K562 (cell line): ENCODE measurements at regions of chr6 and their contacts with region 1.

Region 1: GRCh38 chr6:26031595-26032339 is 55.5 kb upstream of the HFE start:
- DNase-seq: peak; percentile 82 to 99 (median 94)
- ATAC-seq: peak; percentile 67
- H3K4me3 ChIP-seq: peak overlapping the region; percentile 61
- H3K27ac ChIP-seq: peak overlapping the region; percentile 99
- H3K4me1 ChIP-seq: peaks cover 16 to 42% of the 10 kb centered on the region in 2 experiments
- H3K27me3 ChIP-seq: no peaks in the 10 kb centered on the region
- CTCF ChIP-seq: peak; percentile 28 to 60 (median 40)
- EP300 ChIP-seq: peak; percentile 77
- POLR2A ChIP-seq: peak; percentile 100
- RAD21 ChIP-seq: peak; percentile 4 to 31; a peak in 1 of 4 replicates

Region 2: GRCh38 chr6:25962149-25963127 is 69.3 kb before region 1 on chr6 and contains the start of gene TRIM38:
- CTCF ChIA-PET with region 1: no interaction called
- POLR2A ChIA-PET with region 1: interaction called, 16 read pairs
- in situ Hi-C with region 1: no loop called
- intact Hi-C with region 1: no loop called
- DNase-seq: peak; percentile 68 to 88 (median 77)
- ATAC-seq: peak; percentile 90
- H3K4me3 ChIP-seq: peak within 1 kb of the TSS; percentile 51
- H3K27ac ChIP-seq: peak within 1 kb of the TSS; percentile 86
- H3K4me1 ChIP-seq: peaks cover 6 to 19% of the 10 kb centered on the region in 2 experiments; a peak in 3 of 5 replicates
- H3K27me3 ChIP-seq: no peaks in the 10 kb centered on the region
- CTCF ChIP-seq: no peak
- EP300 ChIP-seq: no peak; the same call in 1 of the 2 replicates
- POLR2A ChIP-seq: peak; percentile 91
- RAD21 ChIP-seq: 0 out of 4 replicates have a peak, but pooled peaks of 1 of the 2 experiments have one; percentile 12
- polyA plus RNA-seq, gene TRIM38: 1.7 to 2.3 TPM

Region 3: GRCh38 chr6:26054857-26055669 is 23.3 kb after region 1 on chr6:
- CTCF ChIA-PET with region 1: interaction called, 4 read pairs
- POLR2A ChIA-PET with region 1: interaction called, 597 read pairs
- in situ Hi-C with region 1: no loop called
- intact Hi-C with region 1: loop called (anchors 1 kb)
- DNase-seq: peak; percentile 81 to 95 (median 88)
- ATAC-seq: peak; percentile 68
- H3K4me3 ChIP-seq: peak overlapping the region; percentile 60
- H3K27ac ChIP-seq: peak overlapping the region; percentile 94
- H3K4me1 ChIP-seq: peaks cover 7 to 29% of the 10 kb centered on the region in 2 experiments
- H3K27me3 ChIP-seq: no peaks in the 10 kb centered on the region
- CTCF ChIP-seq: peak; percentile 24 to 42 (median 29); a peak in 3 of 6 replicates
- EP300 ChIP-seq: peak; percentile 34
- POLR2A ChIP-seq: peak; percentile 95
- RAD21 ChIP-seq: peak in 1 of 2 experiments; percentile 59; a peak in 2 of 4 replicates

Region 4: DNA sequence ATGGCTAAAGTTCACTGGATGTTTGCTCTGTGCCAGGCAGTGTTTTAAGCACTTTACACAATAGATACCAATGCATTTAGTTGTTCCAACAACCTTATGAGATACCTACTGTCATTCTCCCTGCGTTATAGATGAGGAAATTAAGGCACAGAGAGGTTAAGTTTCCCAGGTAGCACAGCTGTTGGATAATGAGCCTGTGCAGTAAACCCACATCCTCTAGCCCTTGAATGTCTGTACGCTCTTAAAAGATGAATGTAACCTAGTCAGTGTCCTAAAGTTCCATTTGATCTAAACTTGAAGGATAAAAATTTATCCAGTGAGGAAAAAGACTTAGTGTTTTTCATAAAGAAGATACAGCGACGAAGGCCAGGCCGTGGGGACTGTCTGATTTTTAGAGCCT is 83.5 kb after region 1 on chr6:
- CTCF ChIA-PET with region 1: no interaction called
- POLR2A ChIA-PET with region 1: interaction called, 14 read pairs
- in situ Hi-C with region 1: no loop called
- intact Hi-C with region 1: no loop called
- DNase-seq: no peak
- ATAC-seq: no peak
- H3K4me3 ChIP-seq: no peak overlapping the region
- H3K27ac ChIP-seq: no peak overlapping the region
- H3K4me1 ChIP-seq: peaks cover 0 to 8% of the 10 kb centered on the region in 2 experiments; a peak in 2 of 5 replicates
- H3K27me3 ChIP-seq: no peaks in the 10 kb centered on the region
- CTCF ChIP-seq: no peak
- EP300 ChIP-seq: no peak
- POLR2A ChIP-seq: 0 out of 2 replicates have a peak, but pooled peaks have one; percentile 19
- RAD21 ChIP-seq: no peak

Region 5: DNA sequence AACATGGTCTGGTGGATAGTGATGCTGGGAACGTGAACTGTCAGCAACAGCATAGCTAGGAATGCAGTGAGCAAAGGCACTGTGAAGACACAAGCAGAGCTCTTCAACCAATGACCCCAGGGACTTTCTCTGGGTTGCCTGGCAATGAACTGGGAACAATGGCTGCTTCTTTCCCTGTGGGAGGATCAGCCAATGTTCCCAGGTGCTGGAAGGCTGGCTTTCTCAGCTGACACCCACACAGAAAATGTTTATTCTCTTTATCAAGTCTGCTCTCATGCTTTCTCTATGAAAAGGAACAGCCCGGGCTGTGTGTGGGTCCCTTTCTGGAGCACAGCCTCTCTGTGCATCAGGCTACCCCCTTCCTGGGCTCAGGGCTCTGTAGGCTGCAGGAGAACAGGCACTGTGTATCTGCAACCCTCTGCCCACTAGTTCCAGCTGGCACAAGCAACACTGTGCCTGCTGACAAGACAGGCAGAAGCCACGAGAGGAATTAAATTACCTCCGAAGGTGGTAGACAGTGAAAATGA is 109.7 kb after region 1 on chr6:
- CTCF ChIA-PET with region 1: no interaction called
- POLR2A ChIA-PET with region 1: no interaction called
- in situ Hi-C with region 1: no loop called
- intact Hi-C with region 1: no loop called
- DNase-seq: no peak
- ATAC-seq: peak; percentile 57
- H3K4me3 ChIP-seq: no peak overlapping the region
- H3K27ac ChIP-seq: no peak overlapping the region; the same call in 2 of the 3 replicates
- H3K4me1 ChIP-seq: no peaks in the 10 kb centered on the region
- H3K27me3 ChIP-seq: no peaks in the 10 kb centered on the region
- CTCF ChIP-seq: no peak
- EP300 ChIP-seq: no peak
- POLR2A ChIP-seq: no peak
- RAD21 ChIP-seq: no peak

Region 6: DNA sequence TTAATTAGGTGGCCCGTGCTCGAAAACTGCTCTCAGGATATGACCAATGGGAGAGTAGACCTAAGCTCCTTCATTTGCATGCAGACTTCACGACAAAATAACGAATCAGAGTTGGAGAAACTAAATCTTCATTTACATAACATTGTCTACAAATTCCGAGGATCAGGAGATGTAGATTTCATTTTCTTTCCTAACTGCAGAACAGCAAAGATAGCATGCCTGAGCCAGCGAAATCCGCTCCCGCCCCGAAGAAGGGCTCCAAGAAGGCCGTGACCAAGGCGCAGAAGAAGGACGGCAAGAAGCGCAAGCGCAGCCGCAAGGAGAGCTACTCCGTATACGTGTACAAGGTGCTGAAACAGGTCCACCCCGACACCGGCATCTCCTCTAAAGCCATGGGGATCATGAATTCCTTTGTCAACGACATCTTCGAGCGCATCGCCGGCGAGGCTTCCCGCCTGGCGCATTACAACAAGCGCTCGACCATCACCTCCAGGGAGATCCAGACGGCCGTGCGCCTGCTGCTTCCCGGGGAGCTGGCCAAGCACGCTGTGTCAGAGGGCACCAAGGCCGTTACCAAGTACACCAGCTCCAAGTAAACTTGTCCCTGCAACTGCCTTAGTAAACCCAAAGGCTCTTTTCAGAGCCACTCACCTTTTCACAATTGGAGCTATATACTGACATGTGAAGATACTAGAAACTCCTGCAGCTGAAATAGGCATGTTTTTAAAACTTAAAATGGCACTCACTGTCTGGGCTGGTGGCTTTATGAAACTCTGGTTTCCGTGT is 152.0 kb after region 1 on chr6:
- CTCF ChIA-PET with region 1: no interaction called
- POLR2A ChIA-PET with region 1: interaction called, 30 read pairs
- in situ Hi-C with region 1: no loop called
- intact Hi-C with region 1: no loop called
- DNase-seq: no peak
- ATAC-seq: no peak
- H3K4me3 ChIP-seq: no peak overlapping the region
- H3K27ac ChIP-seq: no peak overlapping the region
- H3K4me1 ChIP-seq: peaks cover 0 to 18% of the 10 kb centered on the region in 2 experiments; a peak in 4 of 5 replicates
- H3K27me3 ChIP-seq: no peaks in the 10 kb centered on the region
- CTCF ChIP-seq: no peak
- EP300 ChIP-seq: no peak
- POLR2A ChIP-seq: no peak
- RAD21 ChIP-seq: no peak

Region 7: DNA sequence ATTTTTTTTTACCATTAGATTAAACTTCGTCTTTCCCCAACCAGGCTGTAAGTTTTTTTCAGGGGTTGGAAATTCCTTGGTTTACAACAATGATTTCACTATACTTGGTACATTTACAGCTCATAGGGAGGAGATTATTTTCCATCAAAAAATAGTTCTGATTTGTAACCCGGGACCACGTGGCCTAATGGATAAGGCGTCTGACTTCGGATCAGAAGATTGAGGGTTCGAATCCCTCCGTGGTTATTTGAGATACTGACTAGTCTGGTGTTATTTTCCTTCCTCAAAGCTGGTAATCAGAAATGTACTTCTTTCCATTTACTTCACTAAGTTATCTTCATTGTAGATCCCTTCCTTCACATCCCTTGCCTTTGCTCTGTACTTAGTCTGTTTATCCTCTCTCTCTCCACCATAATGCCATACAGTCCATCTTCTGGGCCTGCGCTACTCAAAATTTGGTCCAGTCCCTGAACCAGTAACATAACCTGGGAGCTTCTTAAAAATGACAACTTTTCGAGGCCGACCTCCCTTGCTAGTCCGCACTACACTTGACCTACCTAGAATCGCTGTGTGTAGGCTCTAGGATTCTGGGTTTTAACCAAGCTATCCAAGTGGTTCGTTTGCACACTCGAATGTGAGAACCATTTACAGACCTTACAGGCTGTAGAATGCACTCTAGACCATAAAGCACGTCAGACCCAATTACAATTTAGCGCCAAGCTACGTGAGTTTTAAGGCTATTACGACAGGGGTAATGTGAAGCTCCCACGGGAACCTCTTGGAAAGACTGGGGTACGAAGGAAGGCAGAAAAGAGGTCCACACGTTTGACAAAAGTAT is 291.1 kb after region 1 on chr6:
- CTCF ChIA-PET with region 1: no interaction called
- POLR2A ChIA-PET with region 1: interaction called, 10 read pairs
- in situ Hi-C with region 1: no loop called
- intact Hi-C with region 1: no loop called
- DNase-seq: peak in 3 of 4 experiments; percentile 43 to 96 (median 81)
- ATAC-seq: peak; percentile 62
- H3K4me3 ChIP-seq: peak overlapping the region; percentile 59
- H3K27ac ChIP-seq: peak overlapping the region; percentile 75
- H3K4me1 ChIP-seq: peaks cover 8 to 24% of the 10 kb centered on the region in 2 experiments
- H3K27me3 ChIP-seq: no peaks in the 10 kb centered on the region
- CTCF ChIP-seq: no peak
- EP300 ChIP-seq: peak; percentile 54
- POLR2A ChIP-seq: no peak
- RAD21 ChIP-seq: peak in 1 of 2 experiments; percentile 27; a peak in 1 of 4 replicates

Region 8: GRCh38 chr6:27838058-27838944 is 1806.5 kb after region 1 on chr6:
- CTCF ChIA-PET with region 1: no interaction called
- POLR2A ChIA-PET with region 1: interaction called, 8 read pairs
- in situ Hi-C with region 1: loop called (anchors 5 kb)
- intact Hi-C with region 1: loop called (anchors 5 kb)
- DNase-seq: peak; percentile 85 to 99 (median 92)
- ATAC-seq: peak; percentile 74
- H3K4me3 ChIP-seq: peak overlapping the region; percentile 56
- H3K27ac ChIP-seq: peak overlapping the region; percentile 88
- H3K4me1 ChIP-seq: peaks cover 12 to 13% of the 10 kb centered on the region in 2 experiments; a peak in 3 of 5 replicates
- H3K27me3 ChIP-seq: no peaks in the 10 kb centered on the region
- CTCF ChIP-seq: peak in 1 of 3 experiments; percentile 9; a peak in 1 of 6 replicates
- EP300 ChIP-seq: peak; percentile 35
- POLR2A ChIP-seq: peak; percentile 99
- RAD21 ChIP-seq: peak in 1 of 2 experiments; percentile 4; a peak in 1 of 4 replicates